ENCODE measurements at regions of chr1 and their contacts with region 1.

Region 1: DNA sequence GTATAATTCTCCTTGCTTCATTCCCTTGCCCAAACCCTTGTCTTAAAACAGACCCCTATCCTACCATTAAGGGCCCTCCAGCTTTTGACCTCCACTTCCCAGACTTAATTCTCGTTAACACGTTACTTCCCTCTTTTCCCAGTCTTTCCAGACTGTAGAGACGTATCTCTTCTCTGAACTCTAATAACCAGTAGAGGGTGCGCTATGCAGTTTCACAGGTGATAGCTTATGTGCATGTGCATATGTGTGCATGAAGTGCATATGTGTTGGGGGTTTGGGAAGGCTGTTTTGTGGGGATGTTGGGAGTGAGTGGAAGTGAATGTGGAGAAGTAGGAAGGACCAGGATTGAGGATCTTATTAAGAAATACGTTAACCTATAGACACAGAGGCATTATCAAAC is 78.1 kb upstream of the CCDC190 start:
- DNase-seq: no peak
- ATAC-seq: no peak
- H3K4me3 ChIP-seq: no peak overlapping the region
- H3K27ac ChIP-seq: no peak overlapping the region
- H3K4me1 ChIP-seq: peaks cover 0 to 11% (median 0%) of the 10 kb centered on the region in 9 donors
- H3K27me3 ChIP-seq: peaks cover 0 to 24% (median 0%) of the 10 kb centered on the region in 7 donors
- CTCF ChIP-seq: no peak

Region 2: GRCh38 chr1:162984699-162985098 is 45.7 kb after region 1 on chr1:
- intact Hi-C with region 1: no loop called
- DNase-seq: no peak
- ATAC-seq: no peak
- H3K4me3 ChIP-seq: no peak overlapping the region
- H3K27ac ChIP-seq: no peak overlapping the region
- H3K4me1 ChIP-seq: no peaks in the 10 kb centered on the region
- H3K27me3 ChIP-seq: peaks cover 0 to 8% (median 0%) of the 10 kb centered on the region in 7 donors
- CTCF ChIP-seq: no peak

Region 3: DNA sequence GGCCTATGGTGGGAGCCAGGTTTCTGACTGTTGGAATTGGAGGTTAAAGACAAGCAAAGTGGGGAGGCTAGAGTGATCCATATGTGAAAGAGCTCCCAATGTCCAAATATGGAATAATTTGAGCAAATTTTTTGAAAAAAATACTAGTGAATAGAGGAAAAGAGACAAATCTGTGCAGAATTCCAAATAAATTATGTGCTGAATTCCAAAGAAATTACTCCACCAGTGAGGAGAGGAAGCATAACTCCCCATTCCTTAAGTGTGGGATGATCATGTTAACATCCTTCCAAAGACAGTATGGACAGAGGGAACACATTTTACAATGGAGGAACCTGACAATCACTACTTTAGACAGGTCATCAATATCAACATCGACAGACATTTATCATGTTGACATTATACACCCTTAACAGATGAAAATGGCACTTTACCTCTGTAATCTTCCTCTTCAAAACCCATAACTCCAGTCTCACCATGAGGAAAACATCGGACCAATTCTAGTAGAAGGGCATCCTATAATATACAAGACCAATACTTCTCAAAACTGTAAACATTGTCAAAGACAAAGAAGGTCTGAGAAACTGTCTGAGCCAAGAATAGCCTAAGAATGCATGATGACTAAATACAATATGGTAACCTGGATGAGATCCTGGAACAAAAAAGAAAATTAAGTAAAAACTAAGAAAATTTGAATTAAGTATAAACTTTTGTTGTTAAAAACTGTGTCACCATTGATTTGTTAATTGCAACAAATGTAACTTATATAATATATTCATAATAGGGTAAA is 58.7 kb after region 1 on chr1:
- intact Hi-C with region 1: loop called in 1 of 10 experiments (anchors 2 kb)
- DNase-seq: no peak
- ATAC-seq: no peak
- H3K4me3 ChIP-seq: no peak overlapping the region
- H3K27ac ChIP-seq: no peak overlapping the region
- H3K4me1 ChIP-seq: no peaks in the 10 kb centered on the region
- H3K27me3 ChIP-seq: no peaks in the 10 kb centered on the region
- CTCF ChIP-seq: no peak

Measured in heart right ventricle (tissue), 16 donors.